A673 (cell line): ENCODE measurements at regions of chr9 and their contacts with region 1.

Region 1: GRCh38 chr9:26054600-26055520 is 376.6 kb upstream of the TUSC1 start:
- DNase-seq: no peak
- H3K4me3 ChIP-seq: no peak overlapping the region
- H3K27ac ChIP-seq: no peak overlapping the region
- H3K4me1 ChIP-seq: no peaks in the 10 kb centered on the region
- H3K27me3 ChIP-seq: no peaks in the 10 kb centered on the region
- CTCF ChIP-seq: no peak

Region 2: DNA sequence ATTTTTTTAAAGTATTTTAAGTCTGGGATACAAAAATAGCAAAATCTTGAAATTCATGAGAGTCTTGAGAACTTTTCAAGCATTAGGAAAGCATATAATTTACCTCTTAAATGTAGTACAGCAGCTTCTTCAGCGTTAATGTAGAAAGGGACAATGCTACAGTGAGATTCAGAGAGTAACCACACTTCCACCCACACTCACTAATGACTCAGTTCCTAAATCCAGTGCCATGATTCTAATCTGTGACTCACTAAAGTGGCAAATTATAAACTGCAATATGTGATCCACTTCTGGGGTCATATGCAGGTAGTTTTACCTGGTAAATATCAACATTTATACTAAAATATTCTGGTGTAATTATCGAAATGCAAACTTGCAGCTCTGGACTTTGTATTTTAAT is 57.9 kb after region 1 on chr9:
- CTCF ChIA-PET with region 1: no interaction called
- POLR2A ChIA-PET with region 1: no interaction called
- intact Hi-C with region 1: loop called (anchors 10 kb)
- DNase-seq: no peak
- H3K4me3 ChIP-seq: no peak overlapping the region
- H3K27ac ChIP-seq: no peak overlapping the region
- H3K4me1 ChIP-seq: no peaks in the 10 kb centered on the region
- H3K27me3 ChIP-seq: no peaks in the 10 kb centered on the region
- CTCF ChIP-seq: no peak